Activated naive CD4-positive, alpha-beta T cell treated with anti-CD3 and anti-CD28 coated beads for 36 hours (primary cell): ENCODE measurements at regions of chr5 and their contacts with region 1.

Region 1: GRCh38 chr5:131514316-131515283 is 120.4 kb downstream of the RAPGEF6 start:
- DNase-seq: peak; percentile 32
- H3K4me3 Mint-ChIP-seq: peak overlapping the region; percentile 58
- H3K27ac Mint-ChIP-seq: peak overlapping the region; percentile 51
- H3K4me1 Mint-ChIP-seq: peaks cover 57% of the 10 kb centered on the region
- H3K27me3 Mint-ChIP-seq: no peaks in the 10 kb centered on the region

Region 2: GRCh38 chr5:131482617-131483016 is 32.0 kb before region 1 on chr5:
- CTCF ChIA-PET with region 1: no interaction called
- intact Hi-C with region 1: no loop called
- DNase-seq: no peak
- H3K4me3 Mint-ChIP-seq: no peak overlapping the region
- H3K27ac Mint-ChIP-seq: peak overlapping the region; percentile 74
- H3K4me1 Mint-ChIP-seq: peaks cover 50% of the 10 kb centered on the region
- H3K27me3 Mint-ChIP-seq: no peaks in the 10 kb centered on the region

Region 3: DNA sequence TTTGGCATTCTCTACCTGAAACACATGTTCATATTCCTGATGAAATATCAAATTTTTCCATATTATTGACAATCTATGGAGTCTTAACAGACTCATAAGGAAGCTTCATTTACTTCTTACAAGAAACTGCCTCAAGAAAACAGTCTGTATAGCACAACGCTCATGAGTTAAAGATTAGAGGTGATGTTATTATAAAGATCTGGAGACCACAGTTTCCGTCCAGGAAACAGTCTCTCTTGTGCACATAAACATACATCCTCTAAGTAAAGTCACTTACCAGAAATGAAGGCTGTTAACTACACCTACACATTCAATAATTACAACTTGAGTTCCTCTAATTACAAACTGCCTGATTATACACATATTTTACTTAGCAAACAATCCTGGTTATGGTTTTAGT is 33.6 kb after region 1 on chr5:
- CTCF ChIA-PET with region 1: interaction called, 5 read pairs
- intact Hi-C with region 1: loop called (anchors 1 kb)
- DNase-seq: no peak
- H3K4me3 Mint-ChIP-seq: peak overlapping the region; percentile 89
- H3K27ac Mint-ChIP-seq: peak overlapping the region; percentile 99
- H3K4me1 Mint-ChIP-seq: peaks cover 72% of the 10 kb centered on the region
- H3K27me3 Mint-ChIP-seq: no peaks in the 10 kb centered on the region